ENCODE measurements at regions of chr5 and their contacts with region 1.

Region 1: GRCh38 chr5:96868603-96869371 is 7.5 kb upstream of the ERAP2 start:
- DNase-seq: no peak
- ATAC-seq: peak; percentile 81
- H3K4me3 Mint-ChIP-seq: no peak overlapping the region
- H3K27ac Mint-ChIP-seq: peak overlapping the region; percentile 90
- H3K4me1 Mint-ChIP-seq: peaks cover 54% of the 10 kb centered on the region
- H3K27me3 Mint-ChIP-seq: peaks cover 1% of the 10 kb centered on the region

Region 2: GRCh38 chr5:96816411-96816939 is 52.3 kb before region 1 on chr5:
- CTCF ChIA-PET with region 1: interaction called, 16 read pairs
- POLR2A ChIA-PET with region 1: no interaction called
- intact Hi-C with region 1: no loop called
- DNase-seq: peak; percentile 54
- ATAC-seq: peak; percentile 82
- H3K4me3 Mint-ChIP-seq: peak overlapping the region; percentile 71
- H3K27ac Mint-ChIP-seq: peak overlapping the region; percentile 90
- H3K4me1 Mint-ChIP-seq: peaks cover 58% of the 10 kb centered on the region
- H3K27me3 Mint-ChIP-seq: no peaks in the 10 kb centered on the region

Region 3: GRCh38 chr5:96896806-96897205 is 28.0 kb after region 1 on chr5:
- CTCF ChIA-PET with region 1: interaction called, 28 read pairs
- POLR2A ChIA-PET with region 1: interaction called, 5 read pairs
- intact Hi-C with region 1: loop called in 1 of 2 experiments (anchors 5 kb)
- DNase-seq: peak; percentile 59
- ATAC-seq: peak; percentile 57
- H3K4me3 Mint-ChIP-seq: peak overlapping the region; percentile 77
- H3K27ac Mint-ChIP-seq: peak overlapping the region; percentile 97
- H3K4me1 Mint-ChIP-seq: peaks cover 52% of the 10 kb centered on the region
- H3K27me3 Mint-ChIP-seq: no peaks in the 10 kb centered on the region

Region 4: DNA sequence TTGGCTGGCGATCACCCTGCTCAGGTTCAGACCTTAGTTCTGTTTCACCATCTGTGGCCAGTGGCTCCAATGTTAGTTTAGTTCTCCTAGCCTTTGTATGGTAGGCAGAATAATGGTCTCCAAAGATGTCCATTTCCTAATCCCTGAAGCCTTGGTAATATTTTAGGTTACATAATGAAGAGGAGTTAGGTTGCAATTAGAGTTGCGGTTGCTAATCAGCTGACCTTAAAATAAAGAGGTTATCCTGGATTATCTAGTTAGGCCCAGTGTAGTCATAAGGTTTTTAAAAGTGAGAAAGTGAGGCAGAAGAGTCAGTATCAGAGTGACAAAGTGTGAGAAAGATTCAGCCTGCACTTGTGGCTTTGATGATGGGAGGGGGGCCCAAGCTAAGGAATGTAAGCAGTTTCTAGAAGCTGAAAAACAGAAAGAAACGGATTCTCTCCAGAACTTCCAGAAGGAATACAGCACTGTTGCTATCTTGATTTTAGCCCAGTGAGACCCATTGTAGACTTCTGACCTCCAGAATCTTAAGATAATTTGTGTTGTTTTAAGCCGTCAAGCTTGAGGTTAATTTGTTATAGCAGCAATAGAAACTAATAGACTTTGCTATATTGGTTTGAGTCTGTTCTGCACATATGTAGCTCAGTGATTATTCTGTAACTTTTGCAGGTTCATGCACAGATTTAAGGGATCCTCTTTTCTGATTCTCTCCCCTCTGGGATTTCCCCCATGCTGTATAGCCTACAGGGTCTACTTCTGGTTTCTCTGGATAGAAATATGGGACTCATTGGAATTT is 88.7 kb after region 1 on chr5:
- CTCF ChIA-PET with region 1: interaction called, 14 read pairs
- POLR2A ChIA-PET with region 1: no interaction called
- intact Hi-C with region 1: no loop called
- DNase-seq: peak; percentile 73
- ATAC-seq: peak; percentile 93
- H3K4me3 Mint-ChIP-seq: peak overlapping the region; percentile 51
- H3K27ac Mint-ChIP-seq: peak overlapping the region; percentile 84
- H3K4me1 Mint-ChIP-seq: peaks cover 74% of the 10 kb centered on the region
- H3K27me3 Mint-ChIP-seq: no peaks in the 10 kb centered on the region

Region 5: DNA sequence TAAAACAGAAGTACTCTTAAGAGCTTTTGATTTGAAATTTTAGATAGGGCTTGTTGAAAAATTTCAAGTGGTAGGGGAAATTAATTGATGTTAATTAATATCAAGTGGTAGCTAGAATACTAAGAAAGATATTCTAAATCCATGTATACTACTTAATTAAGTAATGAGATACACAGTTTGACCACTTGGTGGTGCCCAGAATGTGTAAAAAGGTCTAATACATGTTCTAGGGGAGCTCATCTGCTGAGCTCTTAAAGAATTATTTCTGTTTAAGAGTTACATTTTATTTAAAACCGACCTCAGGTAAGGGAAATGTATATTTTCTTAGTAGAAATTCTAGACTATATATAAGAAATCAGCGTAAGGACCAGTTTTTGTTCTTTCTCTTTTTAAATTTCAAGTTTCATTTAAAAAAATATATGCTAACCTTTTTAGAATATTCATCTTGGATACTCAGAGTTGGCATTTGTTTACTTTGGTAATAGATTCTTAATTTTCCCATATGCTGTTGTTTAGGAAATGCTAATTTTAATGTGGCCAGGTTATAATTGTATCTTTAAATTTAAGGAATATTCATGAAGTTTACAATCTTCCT is 128.6 kb after region 1 on chr5:
- CTCF ChIA-PET with region 1: interaction called, 10 read pairs
- POLR2A ChIA-PET with region 1: interaction called, 5 read pairs
- intact Hi-C with region 1: loop called (anchors 5 kb)
- DNase-seq: peak; percentile 30
- ATAC-seq: peak; percentile 63
- H3K4me3 Mint-ChIP-seq: no peak overlapping the region
- H3K27ac Mint-ChIP-seq: no peak overlapping the region
- H3K4me1 Mint-ChIP-seq: peaks cover 19% of the 10 kb centered on the region
- H3K27me3 Mint-ChIP-seq: no peaks in the 10 kb centered on the region

Region 6: DNA sequence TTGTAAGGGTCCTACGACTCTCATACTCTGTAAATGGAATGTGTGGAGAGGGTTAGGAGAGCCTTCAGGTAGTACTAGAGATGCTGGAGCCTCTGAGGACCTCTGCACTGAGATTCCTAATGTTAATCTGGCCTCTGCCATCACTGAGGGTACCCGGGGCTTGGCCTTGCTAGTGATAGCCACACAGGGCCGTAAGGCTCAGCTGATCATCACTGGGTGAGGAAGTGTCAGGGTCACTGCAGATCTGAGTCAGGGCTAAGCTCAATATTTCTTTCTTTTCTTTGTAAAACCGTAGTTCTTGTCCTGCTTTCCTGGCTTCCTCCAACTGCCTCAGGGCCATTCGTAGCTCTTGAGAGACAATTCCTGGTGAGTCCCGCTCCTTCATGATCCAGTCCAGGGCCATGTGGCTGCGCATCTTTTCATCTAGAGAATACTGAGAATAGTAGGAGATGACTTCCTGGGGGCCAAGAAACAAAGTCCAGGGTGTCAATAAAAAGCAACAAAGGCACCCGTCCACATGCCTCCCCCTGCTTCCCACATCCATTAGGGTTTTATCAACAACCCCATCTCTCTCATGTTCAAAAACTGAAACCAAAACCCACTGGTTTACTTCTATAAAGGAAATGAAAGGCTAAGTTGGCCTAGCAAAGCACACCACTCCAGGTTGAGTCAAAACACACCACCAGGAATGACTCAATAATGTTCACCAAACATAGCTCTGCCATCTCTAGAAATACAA is 226.0 kb after region 1 on chr5:
- CTCF ChIA-PET with region 1: interaction called, 4 read pairs
- POLR2A ChIA-PET with region 1: no interaction called
- intact Hi-C with region 1: loop called in 1 of 2 experiments (anchors 2 kb)
- DNase-seq: peak; percentile 59
- ATAC-seq: peak; percentile 99
- H3K4me3 Mint-ChIP-seq: no peak overlapping the region
- H3K27ac Mint-ChIP-seq: peak overlapping the region; percentile 15
- H3K4me1 Mint-ChIP-seq: peaks cover 16% of the 10 kb centered on the region
- H3K27me3 Mint-ChIP-seq: peaks cover 10% of the 10 kb centered on the region

Region 7: DNA sequence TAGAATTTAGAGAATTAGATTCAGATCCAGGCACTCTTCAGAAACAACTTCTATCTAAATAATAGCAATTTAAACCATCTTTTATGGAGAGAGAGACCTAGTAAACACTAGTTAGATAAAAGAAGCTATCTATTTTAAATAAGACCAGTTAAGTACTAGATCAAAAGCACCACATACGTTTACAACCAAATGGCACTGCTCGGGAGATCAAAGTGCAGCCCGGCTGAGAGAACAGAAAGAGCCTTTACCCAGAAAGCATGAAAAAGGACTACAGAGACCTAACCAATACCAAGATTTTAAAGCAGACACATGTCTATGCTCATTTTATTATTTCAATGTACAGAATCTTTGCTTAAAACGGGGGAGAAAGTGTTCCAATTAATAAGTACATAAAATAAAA is 242.8 kb after region 1 on chr5:
- CTCF ChIA-PET with region 1: no interaction called
- POLR2A ChIA-PET with region 1: no interaction called
- intact Hi-C with region 1: no loop called
- DNase-seq: peak; percentile 7
- ATAC-seq: no peak
- H3K4me3 Mint-ChIP-seq: no peak overlapping the region
- H3K27ac Mint-ChIP-seq: no peak overlapping the region
- H3K4me1 Mint-ChIP-seq: peaks cover 9% of the 10 kb centered on the region
- H3K27me3 Mint-ChIP-seq: peaks cover 2% of the 10 kb centered on the region